RWPE1 (cell line): ENCODE measurements at regions of chr1 and their contacts with region 1.

Region 1: GRCh38 chr1:226121587-226122400 is 59.3 kb downstream of the H3-3A start:
- DNase-seq: peak; percentile 89
- H3K27ac ChIP-seq: peak overlapping the region; percentile 94
- CTCF ChIP-seq: peak; percentile 96

Region 2: GRCh38 chr1:225694151-225694603 is 427.6 kb before region 1 on chr1:
- CTCF ChIA-PET with region 1: no interaction called
- POLR2A ChIA-PET with region 1: no interaction called
- DNase-seq: no peak
- H3K27ac ChIP-seq: no peak overlapping the region
- CTCF ChIP-seq: no peak

Region 3: DNA sequence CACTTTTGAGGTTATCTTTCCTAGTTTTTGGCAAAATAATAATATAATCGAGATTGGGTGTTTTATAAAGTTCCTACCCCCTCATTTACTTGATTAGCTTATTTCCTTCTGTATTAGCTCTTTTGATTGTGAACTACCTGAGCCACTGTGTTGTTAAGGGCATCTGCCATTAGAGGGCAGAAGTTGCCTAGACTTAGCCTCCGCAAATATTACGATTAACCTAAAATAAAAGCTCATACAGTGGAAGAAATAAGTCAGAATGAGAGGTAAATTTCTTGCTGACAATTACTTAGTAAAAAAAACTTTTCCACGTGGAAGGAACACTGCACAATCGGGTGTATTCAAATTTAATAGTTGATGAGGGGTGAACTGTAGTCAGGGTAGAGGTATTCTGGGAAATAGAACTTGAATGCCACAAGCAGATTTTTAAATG is 57.0 kb before region 1 on chr1:
- CTCF ChIA-PET with region 1: interaction called, 39 read pairs
- POLR2A ChIA-PET with region 1: interaction called, 6 read pairs
- DNase-seq: peak; percentile 62
- H3K27ac ChIP-seq: no peak overlapping the region
- CTCF ChIP-seq: peak; percentile 76

Region 4: DNA sequence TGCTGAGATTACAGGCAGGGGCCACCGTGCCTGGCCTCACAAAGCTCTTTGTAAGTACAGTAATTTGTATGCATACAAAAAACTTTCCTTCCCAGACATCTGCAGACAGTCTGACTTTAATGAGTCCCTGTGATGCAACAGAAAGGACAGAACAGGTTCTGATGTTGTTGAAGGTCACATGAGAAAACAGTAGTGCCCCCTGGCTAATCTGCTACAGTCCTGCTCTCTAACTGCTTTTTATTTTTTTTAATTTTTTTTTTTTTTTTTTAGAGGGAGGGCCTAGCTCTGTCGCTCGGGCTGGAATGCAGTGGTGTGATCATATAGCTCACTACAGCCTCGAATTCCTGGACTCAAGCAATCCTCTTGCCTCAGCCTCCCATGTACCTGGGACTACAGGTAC is 28.0 kb after region 1 on chr1:
- CTCF ChIA-PET with region 1: interaction called, 12 read pairs
- POLR2A ChIA-PET with region 1: no interaction called
- DNase-seq: no peak
- H3K27ac ChIP-seq: no peak overlapping the region
- CTCF ChIP-seq: no peak

Region 5: DNA sequence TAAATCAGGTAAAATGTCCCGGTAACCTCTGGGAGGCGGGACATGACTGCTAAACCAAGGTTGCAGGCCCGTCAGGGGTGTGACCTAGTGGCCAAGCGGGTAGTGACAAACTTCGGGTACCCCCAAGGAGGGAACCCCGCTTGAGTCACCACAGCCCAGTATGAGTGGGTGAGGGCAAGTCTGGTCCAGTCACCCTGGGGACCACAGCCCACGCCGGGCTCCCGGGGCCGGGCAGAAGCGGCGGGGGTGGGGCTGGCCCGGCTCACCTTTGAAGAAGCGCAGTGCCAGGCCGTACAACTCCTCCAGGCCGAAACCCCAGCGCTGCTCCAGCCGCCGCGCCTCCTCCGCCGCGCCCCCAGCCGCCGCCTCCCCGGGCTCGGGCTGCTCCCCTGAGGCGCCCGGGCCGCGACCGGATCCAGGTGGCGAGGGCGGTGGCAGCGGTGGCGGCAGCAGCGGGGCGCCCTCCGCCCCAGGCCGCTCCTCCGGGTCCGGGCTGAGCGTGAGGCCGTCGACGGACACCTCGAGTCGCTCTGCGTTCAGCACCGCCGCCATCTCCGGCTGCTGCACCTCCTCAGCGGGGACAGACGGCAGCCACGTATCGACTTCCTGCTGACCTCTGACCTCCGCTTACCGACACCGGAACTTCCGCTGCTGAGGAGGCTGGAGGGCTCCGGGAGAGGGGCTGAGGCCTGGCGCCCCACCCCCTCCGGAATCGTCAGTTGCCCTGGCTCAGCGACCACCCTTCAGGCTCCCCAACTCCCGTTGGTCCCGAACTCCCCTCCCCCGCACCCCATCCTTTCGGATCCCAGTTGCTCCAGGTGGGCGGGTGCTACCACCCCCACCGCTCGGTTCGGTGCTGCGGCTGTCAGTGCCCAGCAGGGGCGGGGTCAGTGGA is 64.6 kb after region 1 on chr1 and contains the start of gene ACBD3:
- CTCF ChIA-PET with region 1: interaction called, 45 read pairs
- POLR2A ChIA-PET with region 1: interaction called, 16 read pairs
- DNase-seq: peak; percentile 88
- H3K27ac ChIP-seq: peak within 1 kb of the TSS; percentile 89
- CTCF ChIP-seq: no peak

Region 6: GRCh38 chr1:226201029-226201593 is 79.3 kb after region 1 on chr1:
- CTCF ChIA-PET with region 1: interaction called, 75 read pairs
- POLR2A ChIA-PET with region 1: interaction called, 5 read pairs
- DNase-seq: no peak
- H3K27ac ChIP-seq: no peak overlapping the region
- CTCF ChIP-seq: 0 out of 2 replicates have a peak, but pooled peaks have one; percentile 8